ENCODE measurements at regions of chr9 and their contacts with region 1.

Region 1: GRCh38 chr9:6197330-6197729 is 18.3 kb upstream of the IL33 start:
- DNase-seq: no peak
- H3K4me3 ChIP-seq: no peak overlapping the region
- H3K27ac ChIP-seq: no peak overlapping the region
- H3K4me1 ChIP-seq: no peaks in the 10 kb centered on the region
- H3K27me3 ChIP-seq: no peaks in the 10 kb centered on the region; a peak in 1 of 7 replicates
- CTCF ChIP-seq: peak in 2 of 3 experiments; percentile 59 to 62; a peak in 3 of 4 replicates
- EP300 ChIP-seq: no peak
- POLR2A ChIP-seq: no peak
- RAD21 ChIP-seq: peak; percentile 80 to 81

Region 2: GRCh38 chr9:6171667-6172066 is 25.7 kb before region 1 on chr9:
- CTCF ChIA-PET with region 1: interaction called, 11 read pairs
- POLR2A ChIA-PET with region 1: no interaction called
- DNase-seq: no peak
- H3K4me3 ChIP-seq: peak overlapping the region in 1 of 4 experiments; percentile 13; a peak in 1 of 8 replicates
- H3K27ac ChIP-seq: no peak overlapping the region
- H3K4me1 ChIP-seq: peaks cover 0 to 7% (median 6%) of the 10 kb centered on the region in 4 experiments; a peak in 4 of 7 replicates
- H3K27me3 ChIP-seq: peaks cover 0 to 5% (median 0%) of the 10 kb centered on the region in 4 experiments; a peak in 1 of 7 replicates
- CTCF ChIP-seq: no peak
- EP300 ChIP-seq: no peak
- POLR2A ChIP-seq: no peak
- RAD21 ChIP-seq: no peak

Region 3: GRCh38 chr9:6184749-6185645 is 12.3 kb before region 1 on chr9:
- CTCF ChIA-PET with region 1: interaction called, 12 read pairs
- POLR2A ChIA-PET with region 1: interaction called, 4 read pairs
- DNase-seq: no peak
- H3K4me3 ChIP-seq: no peak overlapping the region
- H3K27ac ChIP-seq: no peak overlapping the region
- H3K4me1 ChIP-seq: peaks cover 0 to 5% (median 0%) of the 10 kb centered on the region in 4 experiments; a peak in 2 of 7 replicates
- H3K27me3 ChIP-seq: no peaks in the 10 kb centered on the region
- CTCF ChIP-seq: no peak
- EP300 ChIP-seq: no peak
- POLR2A ChIP-seq: no peak
- RAD21 ChIP-seq: no peak

Region 4: DNA sequence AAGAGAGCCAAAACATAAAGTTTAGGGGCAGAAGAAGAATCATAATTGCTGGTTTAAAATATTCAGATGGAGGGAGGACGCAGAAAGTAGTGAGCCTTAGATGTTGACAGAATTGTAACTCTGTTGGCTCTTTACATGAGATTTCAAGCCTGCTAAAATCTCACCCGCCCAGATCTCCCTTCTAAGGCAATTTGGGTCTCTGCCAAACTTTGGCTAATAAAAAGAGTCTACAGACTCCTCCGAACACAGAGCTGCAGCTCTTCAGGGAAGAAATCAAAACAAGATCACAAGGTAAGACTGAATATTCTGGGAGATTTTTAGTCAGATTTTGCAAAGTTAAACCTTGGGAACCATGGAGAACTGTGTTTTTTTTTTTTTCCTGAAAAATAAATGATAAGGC is 18.2 kb after region 1 on chr9 and contains the start of gene IL33:
- CTCF ChIA-PET with region 1: interaction called, 15 read pairs
- POLR2A ChIA-PET with region 1: no interaction called
- DNase-seq: no peak
- H3K4me3 ChIP-seq: no peak within 1 kb of the TSS
- H3K27ac ChIP-seq: no peak within 1 kb of the TSS
- H3K4me1 ChIP-seq: no peaks in the 10 kb centered on the region
- H3K27me3 ChIP-seq: no peaks in the 10 kb centered on the region
- CTCF ChIP-seq: no peak
- EP300 ChIP-seq: no peak
- POLR2A ChIP-seq: no peak
- RAD21 ChIP-seq: no peak
- total RNA-seq, gene IL33: not detected in 2 replicates

Region 5: GRCh38 chr9:6305954-6306563 is 108.7 kb after region 1 on chr9:
- CTCF ChIA-PET with region 1: interaction called, 99 read pairs
- POLR2A ChIA-PET with region 1: no interaction called
- DNase-seq: no peak
- H3K4me3 ChIP-seq: no peak overlapping the region
- H3K27ac ChIP-seq: no peak overlapping the region
- H3K4me1 ChIP-seq: no peaks in the 10 kb centered on the region
- H3K27me3 ChIP-seq: no peaks in the 10 kb centered on the region
- CTCF ChIP-seq: peak in 2 of 3 experiments; percentile 42 to 48; a peak in 2 of 4 replicates
- EP300 ChIP-seq: no peak
- POLR2A ChIP-seq: no peak
- RAD21 ChIP-seq: peak; percentile 82 to 85

Region 6: DNA sequence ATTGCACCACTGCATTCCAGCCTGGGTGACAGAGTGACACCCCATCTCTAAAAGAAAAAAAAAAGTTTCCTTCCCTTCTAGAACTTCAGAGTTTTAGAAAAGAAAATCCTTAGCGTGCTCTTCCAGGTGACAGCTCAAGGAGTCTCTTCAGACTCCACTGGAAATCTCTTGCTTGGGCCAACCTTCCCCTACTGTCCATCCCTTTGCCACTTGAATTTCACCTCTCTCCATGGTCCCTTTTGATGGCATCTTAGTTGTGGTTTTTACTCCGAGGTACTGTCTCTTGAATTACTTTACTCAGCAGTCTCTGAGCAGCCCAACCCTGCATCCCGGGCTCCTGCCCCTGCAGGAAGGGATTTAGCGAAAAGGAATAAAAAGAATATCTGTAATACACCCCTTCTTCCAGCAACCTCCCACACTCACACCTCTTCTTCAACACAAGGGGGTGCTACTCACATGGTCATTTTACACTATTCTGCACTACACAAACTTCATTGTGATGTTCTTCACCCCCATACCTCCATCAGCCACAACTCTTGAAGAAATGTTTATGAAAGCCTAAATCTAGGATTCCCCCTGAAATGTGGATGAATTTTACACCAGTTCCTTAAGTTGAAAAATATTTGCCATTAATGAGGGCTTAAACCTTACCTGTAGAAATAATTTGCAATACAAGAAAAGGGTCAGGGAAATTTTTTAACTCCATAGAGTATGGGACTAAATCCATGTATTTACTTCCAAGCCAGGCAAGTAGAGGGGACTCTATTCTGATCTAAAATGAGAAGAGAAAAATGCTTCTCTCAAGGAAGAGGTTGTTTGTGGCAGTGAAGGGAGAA is 156.7 kb after region 1 on chr9:
- CTCF ChIA-PET with region 1: interaction called, 14 read pairs
- POLR2A ChIA-PET with region 1: no interaction called
- DNase-seq: peak; percentile 0 to 51
- H3K4me3 ChIP-seq: no peak overlapping the region
- H3K27ac ChIP-seq: no peak overlapping the region
- H3K4me1 ChIP-seq: no peaks in the 10 kb centered on the region
- H3K27me3 ChIP-seq: no peaks in the 10 kb centered on the region
- CTCF ChIP-seq: peak in 2 of 3 experiments; percentile 56 to 69; a peak in 3 of 4 replicates
- EP300 ChIP-seq: no peak
- POLR2A ChIP-seq: no peak
- RAD21 ChIP-seq: peak; percentile 85

Region 7: DNA sequence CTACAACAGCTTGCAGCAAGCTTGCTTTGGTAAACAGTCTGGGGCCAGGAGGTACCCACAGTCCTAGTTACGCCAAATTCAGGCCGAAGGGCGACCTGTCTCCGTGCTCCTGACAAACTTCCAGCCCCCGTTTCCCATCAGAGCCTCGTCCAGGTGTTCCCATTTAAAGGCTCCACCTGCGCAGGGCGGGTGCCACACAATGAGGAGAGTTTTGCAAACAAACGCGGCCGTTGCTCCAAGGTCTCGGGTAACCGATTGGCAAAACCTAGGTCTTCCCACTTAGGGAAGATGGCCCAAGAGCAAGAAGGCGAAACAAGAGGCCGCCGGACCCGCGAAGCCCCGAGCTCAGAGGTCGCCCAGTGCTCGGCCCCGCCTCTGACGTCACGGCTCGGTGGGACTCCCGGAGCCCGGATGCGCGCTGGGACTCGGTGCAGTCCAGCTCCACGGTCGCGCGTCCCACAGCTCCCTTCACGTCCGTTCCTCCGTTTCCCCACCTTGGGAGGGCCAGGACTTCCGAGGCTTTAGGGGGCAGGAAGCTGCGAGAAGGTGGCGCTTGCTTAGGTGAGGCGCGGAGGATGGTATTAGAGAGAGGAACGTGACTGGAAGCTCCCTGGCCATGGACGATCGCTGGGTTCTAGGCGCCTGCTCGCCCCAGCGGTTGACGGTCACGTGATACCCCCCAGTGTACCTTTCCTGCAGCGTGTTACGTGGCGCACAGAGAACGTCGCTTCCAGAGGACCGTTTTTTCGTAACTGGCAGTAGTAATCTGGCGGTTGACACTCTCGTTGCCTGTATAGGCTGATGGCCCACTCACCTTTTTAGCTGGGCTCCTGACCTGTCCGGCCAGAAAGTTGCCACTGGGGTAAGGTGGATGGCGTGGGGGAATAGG is 518.7 kb after region 1 on chr9:
- CTCF ChIA-PET with region 1: no interaction called
- POLR2A ChIA-PET with region 1: no interaction called
- DNase-seq: no peak
- H3K4me3 ChIP-seq: no peak overlapping the region
- H3K27ac ChIP-seq: no peak overlapping the region
- H3K4me1 ChIP-seq: peaks cover 0 to 3% (median 0%) of the 10 kb centered on the region in 4 experiments; a peak in 1 of 7 replicates
- H3K27me3 ChIP-seq: no peaks in the 10 kb centered on the region
- CTCF ChIP-seq: no peak
- EP300 ChIP-seq: no peak
- POLR2A ChIP-seq: no peak
- RAD21 ChIP-seq: no peak

Measured in H1 (cell line).